ENCODE measurements at regions of chr1 and their contacts with region 1.

Region 1: DNA sequence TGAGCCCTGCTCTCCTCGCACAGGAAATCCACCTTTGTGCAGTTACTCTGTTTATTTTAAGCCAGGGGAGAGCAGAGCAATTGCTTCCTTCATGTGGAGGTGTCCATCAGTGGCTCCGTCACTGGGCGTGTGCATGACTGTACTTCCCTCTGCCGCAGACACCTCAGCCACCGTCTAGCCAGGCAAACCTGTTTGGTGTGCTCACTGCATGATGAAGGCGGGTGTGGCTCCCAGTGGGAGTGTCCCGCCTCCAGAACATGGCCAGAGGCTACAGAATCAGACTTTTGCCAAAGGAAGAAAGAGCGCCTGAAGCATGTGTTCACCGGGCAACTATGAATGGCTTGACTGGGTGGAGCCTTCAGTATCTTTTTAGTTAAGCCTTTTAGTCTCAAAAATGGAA is 26.1 kb upstream of the LAMC2 start:
- DNase-seq: peak; percentile 98
- H3K4me3 Mint-ChIP-seq: peak overlapping the region; percentile 43
- H3K27ac Mint-ChIP-seq: no peak overlapping the region
- H3K4me1 Mint-ChIP-seq: peaks cover 15% of the 10 kb centered on the region
- H3K27me3 Mint-ChIP-seq: no peaks in the 10 kb centered on the region
- CTCF ChIP-seq: no peak

Region 2: GRCh38 chr1:182974506-182975191 is 185.3 kb before region 1 on chr1:
- CTCF ChIA-PET with region 1: no interaction called
- intact Hi-C with region 1: loop called (anchors 5 kb)
- DNase-seq: no peak
- H3K4me3 Mint-ChIP-seq: no peak overlapping the region
- H3K27ac Mint-ChIP-seq: peak overlapping the region; percentile 37
- H3K4me1 Mint-ChIP-seq: peaks cover 61% of the 10 kb centered on the region
- H3K27me3 Mint-ChIP-seq: no peaks in the 10 kb centered on the region
- CTCF ChIP-seq: no peak

Region 3: DNA sequence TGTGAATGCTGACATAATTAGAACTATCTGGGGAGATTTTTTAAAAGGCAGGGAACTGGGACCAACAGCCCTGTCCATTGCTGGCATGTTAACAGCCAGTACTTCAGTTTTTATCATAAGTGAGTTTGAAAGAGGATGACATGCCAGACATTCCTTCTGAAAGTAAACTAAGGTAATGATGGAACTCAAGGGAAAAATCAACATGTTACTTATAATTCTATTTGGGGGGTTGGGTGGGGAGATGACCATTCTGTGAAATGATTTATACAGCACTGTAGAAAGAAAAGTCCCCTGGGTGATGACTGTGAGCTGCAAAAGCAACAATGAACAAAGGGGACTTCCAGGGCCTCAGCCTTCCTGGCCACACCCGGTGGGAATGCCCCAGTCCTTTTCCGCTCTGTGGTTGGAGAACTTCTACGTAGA is 20.7 kb after region 1 on chr1:
- CTCF ChIA-PET with region 1: interaction called, 7 read pairs
- intact Hi-C with region 1: loop called (anchors 1 kb)
- DNase-seq: peak; percentile 92
- H3K4me3 Mint-ChIP-seq: peak overlapping the region; percentile 10
- H3K27ac Mint-ChIP-seq: peak overlapping the region; percentile 93
- H3K4me1 Mint-ChIP-seq: peaks cover 68% of the 10 kb centered on the region
- H3K27me3 Mint-ChIP-seq: no peaks in the 10 kb centered on the region
- CTCF ChIP-seq: no peak